ENCODE measurements at regions of chr6 and their contacts with region 1.

Region 1: GRCh38 chr6:32195652-32195901 is 3.1 kb upstream of the GPSM3 start:
- DNase-seq: peak; percentile 94 to 100 (median 98)
- ATAC-seq: peak; percentile 89
- H3K4me3 ChIP-seq: peak overlapping the region; percentile 98
- H3K4me3 Mint-ChIP-seq: peak overlapping the region; percentile 92 to 99 (median 97)
- H3K27ac ChIP-seq: peak overlapping the region; percentile 97
- H3K27ac Mint-ChIP-seq: peak overlapping the region; percentile 86 to 99 (median 97)
- H3K4me1 ChIP-seq: peaks cover 20 to 29% of the 10 kb centered on the region in 2 donors
- H3K4me1 Mint-ChIP-seq: peaks cover 24 to 40% (median 31%) of the 10 kb centered on the region in 7 donors
- H3K27me3 ChIP-seq: no peaks in the 10 kb centered on the region
- H3K27me3 Mint-ChIP-seq: no peaks in the 10 kb centered on the region

Region 2: GRCh38 chr6:31541658-31542521 is 653.7 kb before region 1 on chr6 and contains the start of gene DDX39B:
- CTCF ChIA-PET with region 1: no interaction called
- POLR2A ChIA-PET with region 1: no interaction called
- intact Hi-C with region 1: loop called (anchors 1 kb)
- DNase-seq: peak; percentile 80 to 97 (median 94)
- ATAC-seq: peak; percentile 83
- H3K4me3 ChIP-seq: peak within 1 kb of the TSS; percentile 77
- H3K4me3 Mint-ChIP-seq: peak within 1 kb of the TSS; percentile 84 to 99 (median 98)
- H3K27ac ChIP-seq: peak within 1 kb of the TSS; percentile 97
- H3K27ac Mint-ChIP-seq: peak within 1 kb of the TSS; percentile 90 to 100 (median 100)
- H3K4me1 ChIP-seq: peaks cover 34 to 45% of the 10 kb centered on the region in 2 donors
- H3K4me1 Mint-ChIP-seq: peaks cover 34 to 65% (median 55%) of the 10 kb centered on the region in 7 donors
- H3K27me3 ChIP-seq: no peaks in the 10 kb centered on the region
- H3K27me3 Mint-ChIP-seq: no peaks in the 10 kb centered on the region
- total RNA-seq, gene DDX39B: 443 to 761 (median 546) TPM

Region 3: GRCh38 chr6:31958741-31959739 is 236.5 kb before region 1 on chr6 and contains the starts of genes NELFE and SKIC2:
- CTCF ChIA-PET with region 1: no interaction called
- POLR2A ChIA-PET with region 1: no interaction called
- intact Hi-C with region 1: loop called in 1 of 2 experiments (anchors 1 kb)
- DNase-seq: peak; percentile 94 to 99 (median 98)
- ATAC-seq: peak; percentile 98
- H3K4me3 ChIP-seq: peak within 1 kb of the TSS; percentile 89
- H3K4me3 Mint-ChIP-seq: peak within 1 kb of the TSS; percentile 91 to 100 (median 97)
- H3K27ac ChIP-seq: peak within 1 kb of the TSS; percentile 99
- H3K27ac Mint-ChIP-seq: peak within 1 kb of the TSS; percentile 91 to 99 (median 97)
- H3K4me1 ChIP-seq: peaks cover 18 to 20% of the 10 kb centered on the region in 2 donors
- H3K4me1 Mint-ChIP-seq: peaks cover 23 to 50% (median 39%) of the 10 kb centered on the region in 7 donors
- H3K27me3 ChIP-seq: no peaks in the 10 kb centered on the region
- H3K27me3 Mint-ChIP-seq: no peaks in the 10 kb centered on the region
- total RNA-seq, gene NELFE: 47.5 to 71.7 (median 59.1) TPM
- total RNA-seq, gene SKIC2: 85.6 to 139 (median 101) TPM

Region 4: DNA sequence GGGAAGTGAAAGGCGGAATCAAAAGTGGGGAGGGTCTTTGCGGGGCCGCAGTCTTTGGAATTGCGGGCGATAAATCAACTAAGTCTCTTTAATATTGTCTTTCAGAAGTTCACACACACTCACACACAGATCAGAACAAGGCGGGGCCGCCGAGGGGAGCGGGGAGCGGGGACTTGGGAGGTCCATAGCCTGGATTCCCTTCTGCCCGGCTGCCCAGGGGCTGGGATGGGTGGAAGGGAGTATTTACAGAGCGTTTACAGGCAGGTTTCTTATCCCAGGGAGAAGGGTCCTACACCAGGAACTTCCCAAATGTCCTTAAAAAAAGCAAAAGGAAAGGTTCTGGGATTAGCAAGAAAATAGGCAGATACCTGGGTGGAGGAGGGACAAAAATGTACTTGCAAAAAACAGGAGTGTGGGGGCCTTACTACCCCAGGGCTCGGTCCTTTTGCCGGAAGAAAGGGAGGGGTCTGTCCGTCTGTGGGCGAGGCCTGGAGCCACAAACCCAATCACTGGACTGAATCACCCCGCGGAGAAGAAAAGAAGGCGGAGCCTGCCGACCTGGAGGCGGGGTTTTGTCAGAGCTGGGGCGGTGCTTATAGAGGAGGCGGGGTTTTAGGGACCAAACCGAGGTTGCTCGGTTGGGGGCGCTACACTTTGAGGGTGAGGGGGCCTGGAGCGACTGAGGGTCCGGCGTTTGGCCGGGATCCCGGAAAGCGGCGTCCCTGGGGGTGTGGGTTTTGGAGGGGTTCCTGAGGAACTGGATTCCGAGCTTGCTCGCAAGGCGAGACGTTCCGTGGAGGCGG is 47.1 kb before region 1 on chr6:
- CTCF ChIA-PET with region 1: interaction called, 3 read pairs
- POLR2A ChIA-PET with region 1: interaction called, 7 read pairs
- intact Hi-C with region 1: loop called in 1 of 2 experiments (anchors 1 kb)
- DNase-seq: peak; percentile 62 to 82 (median 72)
- ATAC-seq: peak; percentile 91
- H3K4me3 ChIP-seq: peak overlapping the region; percentile 30
- H3K4me3 Mint-ChIP-seq: peak overlapping the region; percentile 75 to 91 (median 86)
- H3K27ac ChIP-seq: peak overlapping the region; percentile 47
- H3K27ac Mint-ChIP-seq: peak overlapping the region; percentile 46 to 91 (median 85)
- H3K4me1 ChIP-seq: peaks cover 0 to 22% of the 10 kb centered on the region in 2 donors
- H3K4me1 Mint-ChIP-seq: peaks cover 37 to 49% (median 46%) of the 10 kb centered on the region in 7 donors
- H3K27me3 ChIP-seq: no peaks in the 10 kb centered on the region
- H3K27me3 Mint-ChIP-seq: peaks cover 0 to 62% (median 12%) of the 10 kb centered on the region in 5 donors

Region 5: DNA sequence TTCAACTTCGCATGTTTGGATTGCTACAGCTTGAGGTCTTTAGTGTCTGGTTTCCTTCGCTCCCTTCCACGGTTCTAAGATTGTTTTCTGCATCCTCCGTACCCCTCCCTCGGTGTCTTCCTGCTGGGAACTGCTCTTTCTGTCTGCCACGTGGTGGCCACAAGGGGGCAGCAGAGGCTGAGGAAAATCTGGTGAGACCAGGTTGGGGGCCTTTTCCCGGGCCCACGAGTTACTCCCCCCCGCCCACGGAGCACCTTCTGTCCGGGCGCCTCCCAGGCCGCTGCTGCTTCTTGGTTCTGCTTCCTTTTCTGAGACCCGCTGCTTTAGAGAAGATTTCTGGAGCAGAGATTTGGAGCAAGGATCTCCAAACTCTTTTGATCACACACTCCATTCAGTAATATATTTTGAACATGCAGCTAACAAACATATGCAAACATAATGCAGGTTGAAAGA is 49.4 kb after region 1 on chr6:
- CTCF ChIA-PET with region 1: no interaction called
- POLR2A ChIA-PET with region 1: interaction called, 5 read pairs
- intact Hi-C with region 1: loop called in 1 of 2 experiments (anchors 2 kb)
- DNase-seq: peak; percentile 38 to 70 (median 61)
- ATAC-seq: peak; percentile 84
- H3K4me3 ChIP-seq: peak overlapping the region; percentile 5
- H3K4me3 Mint-ChIP-seq: peak overlapping the region; percentile 3 to 79 (median 68)
- H3K27ac ChIP-seq: no peak overlapping the region
- H3K27ac Mint-ChIP-seq: peak overlapping the region in 7 of 9 donors; percentile 14 to 56 (median 36)
- H3K4me1 ChIP-seq: peaks cover 0 to 4% of the 10 kb centered on the region in 2 donors
- H3K4me1 Mint-ChIP-seq: peaks cover 7 to 26% (median 9%) of the 10 kb centered on the region in 7 donors
- H3K27me3 ChIP-seq: no peaks in the 10 kb centered on the region
- H3K27me3 Mint-ChIP-seq: peaks cover 0 to 26% (median 0%) of the 10 kb centered on the region in 5 donors

Region 6: DNA sequence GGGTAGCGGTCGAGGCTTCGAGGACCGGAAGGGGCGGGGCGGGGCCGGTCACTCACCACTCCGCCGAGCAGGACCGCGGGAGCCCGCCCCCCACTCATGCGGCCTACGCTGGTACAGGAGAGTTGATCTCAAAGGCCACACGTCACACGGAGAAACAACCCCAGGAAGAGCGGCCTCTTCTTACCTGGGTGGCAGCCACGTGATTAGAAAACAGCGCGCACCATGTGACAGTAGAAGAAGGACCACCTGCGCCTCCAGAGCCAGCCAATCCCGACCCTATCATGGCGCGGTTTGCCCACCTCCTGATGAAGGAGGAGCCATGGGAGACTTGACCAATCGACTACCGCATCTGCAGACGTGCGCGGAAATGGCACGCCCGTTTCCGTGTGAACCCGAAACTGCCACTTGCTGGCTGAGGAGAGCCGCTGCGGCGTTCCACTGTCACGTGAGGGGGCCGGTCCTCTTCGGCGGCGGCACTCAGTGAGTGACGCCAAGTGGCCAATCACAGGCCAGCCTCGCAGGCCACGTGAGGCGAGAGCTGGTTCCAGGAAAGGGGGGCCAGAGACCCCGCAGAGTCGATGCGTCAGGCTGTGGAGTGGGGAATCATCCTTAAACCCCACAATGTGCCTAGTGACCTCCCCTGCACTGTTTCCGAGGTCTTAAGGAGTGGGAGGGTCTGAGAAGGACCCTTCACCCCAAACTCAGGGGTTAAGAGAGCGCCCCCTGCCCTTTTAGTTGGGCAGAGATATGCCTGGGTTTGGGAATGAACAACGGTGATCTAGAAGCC is 1222.5 kb after region 1 on chr6 and contains the start of gene CUTA:
- CTCF ChIA-PET with region 1: no interaction called
- POLR2A ChIA-PET with region 1: no interaction called
- intact Hi-C with region 1: loop called in 1 of 2 experiments (anchors 10 kb)
- DNase-seq: peak; percentile 91 to 100 (median 99)
- ATAC-seq: peak; percentile 92
- H3K4me3 ChIP-seq: peak within 1 kb of the TSS; percentile 74
- H3K4me3 Mint-ChIP-seq: peak within 1 kb of the TSS; percentile 88 to 97 (median 94)
- H3K27ac ChIP-seq: peak within 1 kb of the TSS; percentile 94
- H3K27ac Mint-ChIP-seq: peak within 1 kb of the TSS; percentile 98 to 100 (median 99)
- H3K4me1 ChIP-seq: peaks cover 31 to 54% of the 10 kb centered on the region in 2 donors
- H3K4me1 Mint-ChIP-seq: peaks cover 60 to 89% (median 73%) of the 10 kb centered on the region in 7 donors
- H3K27me3 ChIP-seq: no peaks in the 10 kb centered on the region
- H3K27me3 Mint-ChIP-seq: no peaks in the 10 kb centered on the region
- total RNA-seq, gene CUTA: 148 to 235 (median 158) TPM

Measured in naive thymus-derived CD4-positive, alpha-beta T cell (primary cell).